ENCODE measurements at regions of chr6 and their contacts with region 1.

Region 1: DNA sequence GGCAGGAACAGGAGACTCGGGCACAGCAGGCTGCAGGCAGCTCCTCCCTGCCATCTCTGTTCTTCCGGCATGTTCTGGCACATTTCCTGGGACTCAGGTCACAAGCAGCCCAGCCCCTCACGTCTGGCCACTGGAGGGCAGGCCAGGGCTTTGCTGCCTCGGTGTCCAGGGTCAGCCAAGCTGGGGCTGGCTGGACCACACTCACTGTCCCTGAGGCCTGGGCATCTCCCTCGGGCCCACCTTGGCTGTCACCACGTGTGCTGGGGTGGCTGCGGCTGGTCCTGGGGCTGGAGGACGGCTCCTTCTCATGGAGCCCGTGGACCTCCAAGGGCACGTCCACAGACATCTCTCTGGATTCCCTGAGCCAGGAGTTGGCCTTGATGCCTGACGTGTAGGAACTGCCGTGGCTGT is 18.5 kb downstream of the FRMD1 start:
- DNase-seq: peak; percentile 64 to 77
- ATAC-seq: peak; percentile 78 to 88 (median 84)
- H3K4me3 ChIP-seq: no peak overlapping the region
- H3K27ac ChIP-seq: no peak overlapping the region
- H3K4me1 ChIP-seq: peaks cover 1% of the 10 kb centered on the region
- H3K27me3 ChIP-seq: no peaks in the 10 kb centered on the region
- CTCF ChIP-seq: peak; percentile 56

Region 2: DNA sequence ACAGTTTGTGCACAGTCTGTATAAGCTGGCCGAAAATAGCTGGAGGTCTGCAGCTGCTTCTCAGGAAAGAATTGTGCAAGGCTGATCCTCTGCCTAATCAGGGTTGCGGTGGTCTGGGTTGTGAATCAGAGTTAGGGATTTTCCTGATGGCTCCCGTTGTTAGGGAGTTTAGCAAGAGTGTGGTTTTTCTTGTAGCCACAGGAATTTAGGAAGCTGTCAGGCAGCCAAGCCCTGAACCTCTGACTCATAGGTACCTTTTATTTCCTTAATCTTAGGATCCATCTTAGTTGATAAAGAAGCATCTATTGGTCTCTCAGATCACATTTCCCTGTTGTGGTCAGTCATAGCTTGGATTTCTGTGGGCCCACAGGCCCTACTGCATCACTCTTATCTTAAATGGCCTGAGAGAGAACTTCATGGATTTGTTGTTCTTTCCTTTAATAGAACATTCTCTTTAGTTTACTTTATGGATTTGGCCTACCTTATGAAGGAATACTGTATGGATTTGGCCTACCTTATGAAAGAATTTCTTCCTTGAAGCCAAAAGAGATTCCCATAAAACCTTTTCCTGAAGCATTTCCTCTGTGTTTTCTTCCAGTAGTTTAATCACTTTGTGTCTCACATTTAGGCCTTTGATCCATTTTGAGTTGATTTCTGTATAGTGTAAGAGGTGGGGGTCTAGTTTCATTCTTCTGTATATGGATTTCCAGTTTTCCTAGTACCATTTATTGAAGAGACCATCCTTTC is 52.8 kb before region 1 on chr6:
- intact Hi-C with region 1: no loop called
- DNase-seq: no peak
- ATAC-seq: peak; percentile 54 to 90 (median 69)
- H3K4me3 ChIP-seq: no peak overlapping the region
- H3K27ac ChIP-seq: no peak overlapping the region
- H3K4me1 ChIP-seq: no peaks in the 10 kb centered on the region
- H3K27me3 ChIP-seq: no peaks in the 10 kb centered on the region
- CTCF ChIP-seq: no peak

Region 3: DNA sequence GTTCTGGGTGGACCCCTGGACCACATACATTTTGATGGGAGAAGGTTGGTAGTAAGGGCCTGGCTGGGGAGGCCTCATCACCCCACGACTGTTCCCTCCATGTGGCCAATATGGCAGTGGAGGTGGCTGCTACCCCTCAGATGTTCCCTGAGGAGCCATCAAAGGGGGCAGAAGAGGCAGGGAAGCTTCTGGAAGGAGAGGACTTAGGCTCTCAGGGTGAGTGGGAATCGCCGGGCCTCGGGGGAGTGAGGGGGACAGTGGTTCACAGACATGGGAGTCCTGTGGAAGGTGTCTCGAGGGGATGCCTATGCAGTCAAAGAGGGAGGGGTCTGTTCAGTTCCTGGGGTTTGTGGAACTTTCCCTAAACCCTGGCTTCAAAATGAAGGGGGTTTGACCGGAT is 51.4 kb after region 1 on chr6:
- intact Hi-C with region 1: loop called (anchors 1 to 5 kb)
- DNase-seq: no peak
- ATAC-seq: no peak
- H3K4me3 ChIP-seq: no peak overlapping the region
- H3K27ac ChIP-seq: no peak overlapping the region
- H3K4me1 ChIP-seq: no peaks in the 10 kb centered on the region
- H3K27me3 ChIP-seq: no peaks in the 10 kb centered on the region
- CTCF ChIP-seq: no peak

Region 4: DNA sequence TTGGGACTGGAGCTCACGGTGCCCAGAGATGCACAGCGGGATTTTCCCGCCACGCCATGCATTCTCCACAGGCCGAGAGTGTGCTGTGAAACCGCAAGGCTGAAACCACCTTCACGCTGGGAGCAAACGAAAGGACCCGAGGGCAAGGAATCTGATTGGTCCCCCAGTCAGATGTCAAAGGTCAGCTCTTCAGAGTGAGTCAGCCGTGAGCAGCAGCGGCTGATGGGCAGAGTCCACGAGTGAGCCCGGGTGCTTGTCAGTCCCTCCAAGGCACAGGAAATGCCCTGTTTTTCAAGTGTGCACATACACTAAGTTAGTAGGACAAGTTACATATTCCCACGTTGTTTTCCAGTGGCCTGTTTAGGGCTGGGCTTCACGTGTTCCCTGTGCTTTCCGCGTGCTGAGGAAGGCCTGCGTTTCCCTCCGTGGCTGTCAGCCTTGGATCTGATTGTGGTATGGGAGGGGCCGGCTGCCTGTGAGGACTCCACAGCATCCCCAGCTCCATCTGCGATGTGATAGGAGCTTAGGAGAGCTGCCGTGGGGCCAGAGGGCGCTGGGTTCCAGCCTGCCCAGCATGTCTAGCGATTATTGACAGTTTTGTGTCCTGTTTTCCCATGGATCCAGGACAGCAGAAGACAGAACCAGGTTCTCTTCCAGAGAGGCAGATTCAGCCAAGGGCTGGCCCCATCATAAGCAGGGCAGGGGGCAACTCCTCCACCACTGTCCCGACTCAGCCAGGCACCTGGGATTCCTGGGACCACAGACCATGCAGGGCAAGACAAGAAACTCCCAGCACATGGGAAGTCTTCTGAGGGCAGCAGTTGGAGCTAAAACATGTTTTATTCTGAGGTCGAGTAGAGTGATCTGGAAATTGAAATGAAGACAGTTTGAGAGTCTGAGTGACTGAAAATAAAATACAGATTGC is 56.7 kb after region 1 on chr6:
- intact Hi-C with region 1: loop called (anchors 1 to 5 kb)
- DNase-seq: no peak
- ATAC-seq: no peak
- H3K4me3 ChIP-seq: no peak overlapping the region
- H3K27ac ChIP-seq: no peak overlapping the region
- H3K4me1 ChIP-seq: no peaks in the 10 kb centered on the region
- H3K27me3 ChIP-seq: no peaks in the 10 kb centered on the region
- CTCF ChIP-seq: no peak

Region 5: DNA sequence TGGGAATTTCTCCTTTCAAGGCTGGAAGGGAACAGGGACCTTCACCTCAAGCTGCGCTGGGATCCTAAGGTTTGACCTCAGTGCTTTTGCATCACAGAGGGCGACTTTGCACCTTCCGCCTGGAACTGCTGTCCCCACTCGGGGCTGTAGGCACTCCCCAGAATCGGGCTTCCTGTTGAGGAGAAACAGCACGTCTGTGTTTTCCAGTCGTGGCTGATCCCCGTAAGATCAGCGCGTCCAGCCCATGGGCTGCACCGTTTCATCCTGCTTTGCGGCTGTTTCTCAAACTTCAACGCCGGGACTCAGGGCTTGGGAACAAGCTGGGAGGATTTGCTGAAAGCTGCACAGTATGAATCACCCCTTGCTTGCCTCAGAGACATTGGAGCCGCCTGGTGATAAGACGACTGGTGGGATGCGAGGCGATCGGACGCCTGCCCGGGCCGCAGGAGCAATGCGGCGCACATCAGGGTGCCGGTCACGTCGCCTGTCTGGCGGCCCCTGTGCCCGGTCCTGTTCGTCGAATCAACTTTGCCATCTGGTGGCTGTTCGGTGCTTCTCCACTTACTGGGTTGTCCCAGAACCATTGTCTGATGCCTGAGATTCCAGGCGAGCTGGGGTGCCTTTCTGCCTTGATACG is 72.1 kb after region 1 on chr6:
- intact Hi-C with region 1: loop called in 1 of 2 experiments (anchors 5 kb)
- DNase-seq: peak; percentile 52 to 80
- ATAC-seq: peak; percentile 76 to 90 (median 80)
- H3K4me3 ChIP-seq: peak overlapping the region; percentile 57
- H3K27ac ChIP-seq: no peak overlapping the region
- H3K4me1 ChIP-seq: peaks cover 6% of the 10 kb centered on the region
- H3K27me3 ChIP-seq: peaks cover 0 to 7% (median 0%) of the 10 kb centered on the region in 3 donors
- CTCF ChIP-seq: peak; percentile 47

Region 6: DNA sequence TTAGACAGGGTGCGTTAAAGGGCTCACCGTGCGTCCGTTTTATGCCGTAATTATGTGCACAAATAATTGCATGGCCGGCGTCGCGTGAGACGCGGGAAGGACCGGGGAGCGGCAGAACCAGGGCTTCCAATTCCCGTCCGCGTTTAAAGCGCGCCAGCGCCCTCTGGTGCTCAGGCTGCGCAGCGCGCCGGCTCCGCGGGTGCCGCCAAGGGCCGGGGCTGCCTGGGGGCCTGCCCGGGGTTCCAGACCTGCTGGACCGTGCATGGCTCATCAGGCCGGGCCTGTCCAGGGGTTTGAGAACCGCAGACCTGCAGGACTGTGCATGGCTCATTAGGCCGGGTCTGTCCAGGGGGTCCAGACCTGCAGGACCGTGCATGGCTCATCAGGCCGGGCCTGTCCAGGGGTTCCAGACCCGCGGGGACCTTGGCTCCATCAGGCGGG is 824.1 kb after region 1 on chr6:
- intact Hi-C with region 1: loop called in 1 of 2 experiments (anchors 10 kb)
- DNase-seq: peak; percentile 70 to 83
- ATAC-seq: peak; percentile 77 to 94 (median 82)
- H3K4me3 ChIP-seq: peak overlapping the region; percentile 51
- H3K27ac ChIP-seq: no peak overlapping the region
- H3K4me1 ChIP-seq: no peaks in the 10 kb centered on the region
- H3K27me3 ChIP-seq: peaks cover 0 to 5% (median 2%) of the 10 kb centered on the region in 3 donors
- CTCF ChIP-seq: peak; percentile 91